ENCODE measurements at regions of chr11 and their contacts with region 1.

Region 1: GRCh38 chr11:66579017-66579606 is 10.7 kb upstream of the CTSF start:
- DNase-seq: peak; percentile 79 to 80
- H3K4me3 ChIP-seq: no peak overlapping the region
- H3K27ac ChIP-seq: no peak overlapping the region
- H3K4me1 ChIP-seq: no peaks in the 10 kb centered on the region
- H3K27me3 ChIP-seq: no peaks in the 10 kb centered on the region
- CTCF ChIP-seq: peak; percentile 75 to 82 (median 80)
- POLR2A ChIP-seq: no peak

Region 2: GRCh38 chr11:66677599-66678375 is 98.7 kb after region 1 on chr11 and contains the start of gene RBM4B:
- intact Hi-C with region 1: loop called (anchors 2 kb)
- DNase-seq: peak; percentile 96
- H3K4me3 ChIP-seq: peak within 1 kb of the TSS; percentile 82 to 83
- H3K27ac ChIP-seq: peak within 1 kb of the TSS; percentile 95
- H3K4me1 ChIP-seq: no peaks in the 10 kb centered on the region
- H3K27me3 ChIP-seq: no peaks in the 10 kb centered on the region
- CTCF ChIP-seq: no peak
- POLR2A ChIP-seq: peak; percentile 55 to 84
- total RNA-seq, gene RBM4B: 5.0 to 60.3 (median 20.1) TPM

Measured in uterus (tissue), 4 donors.